ENCODE measurements at regions of chr2 and their contacts with region 1.

Region 1: DNA sequence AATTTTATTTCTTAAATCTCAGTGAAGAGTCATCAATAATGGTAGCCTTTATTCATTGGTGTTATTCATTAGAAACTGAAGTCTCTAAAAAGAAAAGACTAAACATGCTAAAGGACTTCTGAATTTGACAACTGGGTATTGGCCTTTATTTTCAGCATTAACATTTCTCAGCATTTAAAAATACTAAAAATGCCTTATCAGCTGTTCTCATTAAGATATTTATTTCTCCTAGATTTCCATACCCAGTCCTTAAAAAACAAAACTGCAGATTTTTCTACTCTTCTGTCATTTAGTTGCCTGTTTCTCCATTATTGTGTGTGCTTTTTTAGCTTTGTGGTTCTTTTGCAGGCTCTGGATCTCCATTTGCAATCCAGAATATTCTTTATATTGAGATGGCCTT is 31.2 kb upstream of the METAP1D start:
- DNase-seq: no peak
- ATAC-seq: no peak
- H3K4me3 ChIP-seq: no peak overlapping the region
- H3K4me3 Mint-ChIP-seq: no peak overlapping the region
- H3K27ac ChIP-seq: no peak overlapping the region
- H3K27ac Mint-ChIP-seq: no peak overlapping the region
- H3K4me1 ChIP-seq: peaks cover 0 to 2% of the 10 kb centered on the region in 2 donors
- H3K4me1 Mint-ChIP-seq: peaks cover 5 to 36% (median 25%) of the 10 kb centered on the region in 7 donors
- H3K27me3 ChIP-seq: no peaks in the 10 kb centered on the region
- H3K27me3 Mint-ChIP-seq: no peaks in the 10 kb centered on the region

Region 2: GRCh38 chr2:171957061-171957460 is 11.4 kb before region 1 on chr2:
- CTCF ChIA-PET with region 1: no interaction called
- POLR2A ChIA-PET with region 1: no interaction called
- intact Hi-C with region 1: loop called in 1 of 2 experiments (anchors 2 kb)
- DNase-seq: no peak
- ATAC-seq: no peak
- H3K4me3 ChIP-seq: no peak overlapping the region
- H3K4me3 Mint-ChIP-seq: no peak overlapping the region
- H3K27ac ChIP-seq: no peak overlapping the region
- H3K27ac Mint-ChIP-seq: peak overlapping the region in 1 of 9 donors; percentile 19
- H3K4me1 ChIP-seq: peaks cover 6 to 8% of the 10 kb centered on the region in 2 donors
- H3K4me1 Mint-ChIP-seq: peaks cover 15 to 43% (median 26%) of the 10 kb centered on the region in 7 donors
- H3K27me3 ChIP-seq: no peaks in the 10 kb centered on the region
- H3K27me3 Mint-ChIP-seq: no peaks in the 10 kb centered on the region